ENCODE measurements at regions of chr9 and their contacts with region 1.

Region 1: GRCh38 chr9:132354637-132355355 is at the start of gene SETX:
- DNase-seq: peak; percentile 84
- H3K4me3 ChIP-seq: peak within 1 kb of the TSS; percentile 98
- H3K27me3 ChIP-seq: no peaks in the 10 kb centered on the region
- CTCF ChIP-seq: no peak
- polyA plus RNA-seq, gene SETX: 15.3 and 24.4 TPM in 2 replicates

Region 2: GRCh38 chr9:132341177-132341840 is 13.5 kb before region 1 on chr9:
- CTCF ChIA-PET with region 1: interaction called, 5 read pairs
- POLR2A ChIA-PET with region 1: interaction called, 11 read pairs
- DNase-seq: no peak
- H3K4me3 ChIP-seq: no peak overlapping the region
- H3K27me3 ChIP-seq: no peaks in the 10 kb centered on the region
- CTCF ChIP-seq: no peak

Measured in BJ (cell line).